Posterior vena cava (tissue), 2 donors: ENCODE measurements at regions of chr1 and their contacts with region 1.

Region 1: DNA sequence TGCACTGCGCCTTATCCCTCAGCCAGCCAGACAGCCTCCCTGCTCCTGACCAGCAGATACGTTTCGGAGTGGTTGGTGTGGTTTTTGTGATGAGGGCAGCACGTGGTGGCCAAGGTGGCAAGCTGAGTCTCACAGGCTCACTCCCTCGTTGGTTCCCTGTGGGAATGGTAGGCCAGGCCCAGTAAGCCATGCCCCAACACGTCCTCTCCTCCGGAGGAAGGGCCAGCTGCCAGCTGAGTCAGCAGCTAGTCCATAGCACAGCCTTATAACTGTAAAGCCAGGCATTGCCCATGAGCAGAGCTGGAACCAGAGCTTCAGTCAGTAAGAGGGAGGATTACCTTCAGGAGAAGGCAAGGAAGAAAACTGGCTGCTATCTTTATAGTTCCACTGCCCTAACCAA is 29.5 kb downstream of the SZRD1 start:
- DNase-seq: no peak

Region 2: DNA sequence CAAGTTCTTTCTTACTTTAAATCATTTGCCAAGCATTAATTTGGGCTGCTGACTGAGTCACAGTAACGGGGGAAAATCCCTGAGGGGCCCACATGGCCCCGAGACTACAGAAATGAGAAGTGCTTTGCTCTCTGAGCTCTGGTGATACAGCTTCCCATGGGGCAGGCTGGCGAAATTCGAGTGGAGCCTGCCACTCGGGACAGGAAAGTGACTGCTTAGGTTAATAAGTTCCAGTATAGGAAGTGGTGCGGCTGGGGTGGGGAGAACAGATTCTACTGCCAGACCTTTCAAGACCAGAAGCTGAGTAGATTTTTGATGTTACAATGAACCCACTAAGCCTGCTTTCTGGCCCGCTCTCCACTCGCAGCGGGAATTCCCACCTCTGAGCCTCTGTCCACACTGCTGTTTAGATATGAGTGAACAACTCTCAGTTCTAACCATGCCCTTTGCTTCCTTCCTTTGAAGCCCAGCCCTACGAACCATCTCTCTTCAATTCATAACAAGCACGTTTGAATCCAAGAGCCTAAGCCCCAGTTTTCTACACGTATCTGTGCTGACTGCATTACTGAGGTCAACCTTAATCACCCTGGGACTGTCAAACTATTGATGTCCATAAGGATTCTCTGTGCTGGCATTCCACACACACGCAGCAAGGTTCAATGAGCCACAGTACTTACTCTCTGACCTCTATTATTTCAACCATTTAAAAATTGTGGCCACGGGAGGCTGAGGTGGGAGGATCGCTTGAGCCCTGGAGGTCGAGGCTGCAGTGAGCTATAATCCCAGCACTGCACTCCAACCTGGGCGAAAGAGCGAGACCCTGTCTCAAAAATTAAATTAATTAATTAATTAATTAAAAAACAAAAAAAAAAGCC is 430.3 kb before region 1 on chr1:
- intact Hi-C with region 1: no loop called
- DNase-seq: no peak

Region 3: GRCh38 chr1:16266411-16267118 is 130.0 kb before region 1 on chr1:
- intact Hi-C with region 1: no loop called
- DNase-seq: no peak

Region 4: GRCh38 chr1:16352842-16353535 is 43.6 kb before region 1 on chr1:
- intact Hi-C with region 1: no loop called
- DNase-seq: no peak

Region 5: GRCh38 chr1:16436946-16437474 is 40.4 kb after region 1 on chr1 and contains the start of gene SPATA21:
- intact Hi-C with region 1: loop called in 1 of 2 experiments (anchors 1 kb)
- DNase-seq: no peak
- total RNA-seq, gene SPATA21: not detected